Ovary (tissue), 10 donors: ENCODE measurements at regions of chr18 and their contacts with region 1.

Region 1: GRCh38 chr18:1229634-1230033 is 325.0 kb downstream of the ADCYAP1 start:
- DNase-seq: no peak
- H3K4me3 ChIP-seq: no peak overlapping the region
- H3K27ac ChIP-seq: no peak overlapping the region
- H3K4me1 ChIP-seq: no peaks in the 10 kb centered on the region
- H3K27me3 ChIP-seq: no peaks in the 10 kb centered on the region
- CTCF ChIP-seq: no peak
- EP300 ChIP-seq: no peak
- POLR2A ChIP-seq: no peak

Region 2: DNA sequence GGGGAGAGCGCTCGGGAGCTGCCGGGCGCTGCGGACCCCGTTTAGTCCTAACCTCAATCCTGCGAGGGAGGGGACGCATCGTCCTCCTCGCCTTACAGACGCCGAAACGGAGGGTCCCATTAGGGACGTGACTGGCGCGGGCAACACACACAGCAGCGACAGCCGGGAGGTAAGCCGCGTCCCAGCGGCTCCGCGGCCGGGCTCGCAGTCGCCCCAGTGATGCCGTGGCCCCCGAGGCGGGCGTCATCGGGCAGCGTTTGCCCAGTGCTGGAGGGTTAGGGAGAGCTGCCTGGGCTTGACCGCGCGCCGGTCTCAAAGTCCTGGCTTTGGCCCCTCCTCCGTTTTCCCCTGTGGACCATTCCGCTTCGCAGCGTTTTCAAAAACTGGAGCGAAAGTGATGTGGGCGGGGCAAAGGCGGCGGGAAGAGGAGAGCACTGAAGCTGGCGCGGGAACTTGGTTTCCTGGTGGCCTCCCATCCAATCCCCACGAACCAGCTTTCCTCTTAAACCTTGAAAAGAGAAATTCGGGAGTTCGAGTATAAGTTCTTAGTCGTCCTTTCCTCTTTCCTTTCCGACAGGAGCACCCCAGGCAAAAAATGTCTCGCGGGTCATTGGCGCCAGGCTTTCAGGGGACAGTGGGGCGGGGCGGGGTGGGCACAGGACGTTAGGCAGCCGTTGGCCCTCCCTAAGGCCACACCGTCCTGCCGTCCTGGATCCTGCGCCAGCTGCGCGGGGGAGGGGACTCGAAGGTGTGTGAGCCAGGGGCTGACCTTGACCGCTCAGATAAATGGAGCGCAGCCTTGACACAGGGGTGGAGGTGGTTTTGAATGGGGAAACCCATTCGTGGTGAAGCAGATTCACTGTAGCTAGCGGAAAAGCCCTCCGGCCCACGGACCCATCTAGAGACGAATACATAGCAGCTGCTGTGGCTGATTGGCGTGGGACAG is 571.4 kb before region 1 on chr18:
- intact Hi-C with region 1: loop called in 1 of 4 experiments (anchors 10 kb)
- DNase-seq: peak; percentile 75 to 88 (median 81)
- H3K4me3 ChIP-seq: peak overlapping the region; percentile 59
- H3K27ac ChIP-seq: no peak overlapping the region
- H3K4me1 ChIP-seq: peaks cover 3% of the 10 kb centered on the region
- H3K27me3 ChIP-seq: no peaks in the 10 kb centered on the region
- CTCF ChIP-seq: no peak
- EP300 ChIP-seq: no peak
- POLR2A ChIP-seq: no peak

Region 3: GRCh38 chr18:765764-766549 is 463.7 kb before region 1 on chr18:
- intact Hi-C with region 1: no loop called
- DNase-seq: no peak
- H3K4me3 ChIP-seq: no peak overlapping the region
- H3K27ac ChIP-seq: no peak overlapping the region
- H3K4me1 ChIP-seq: no peaks in the 10 kb centered on the region
- H3K27me3 ChIP-seq: no peaks in the 10 kb centered on the region
- CTCF ChIP-seq: no peak
- EP300 ChIP-seq: no peak
- POLR2A ChIP-seq: no peak